T-cell (primary cell): ENCODE measurements at regions of chr5 and their contacts with region 1.

Region 1: GRCh38 chr5:82058710-82059109 is 86.9 kb downstream of the ATG10 start:
- DNase-seq: no peak
- ATAC-seq: no peak
- H3K4me3 ChIP-seq: no peak overlapping the region
- H3K4me3 Mint-ChIP-seq: no peak overlapping the region
- H3K27ac ChIP-seq: no peak overlapping the region
- H3K27ac Mint-ChIP-seq: no peak overlapping the region
- H3K4me1 ChIP-seq: no peaks in the 10 kb centered on the region
- H3K4me1 Mint-ChIP-seq: peaks cover 0 to 14% (median 6%) of the 10 kb centered on the region in 3 donors
- H3K27me3 ChIP-seq: no peaks in the 10 kb centered on the region
- H3K27me3 Mint-ChIP-seq: no peaks in the 10 kb centered on the region

Region 2: GRCh38 chr5:81994679-81995078 is 64.0 kb before region 1 on chr5:
- CTCF ChIA-PET with region 1: no interaction called
- POLR2A ChIA-PET with region 1: no interaction called
- DNase-seq: no peak
- ATAC-seq: no peak
- H3K4me3 ChIP-seq: no peak overlapping the region
- H3K4me3 Mint-ChIP-seq: no peak overlapping the region
- H3K27ac ChIP-seq: no peak overlapping the region
- H3K27ac Mint-ChIP-seq: no peak overlapping the region
- H3K4me1 ChIP-seq: no peaks in the 10 kb centered on the region
- H3K4me1 Mint-ChIP-seq: peaks cover 0 to 14% (median 2%) of the 10 kb centered on the region in 3 donors
- H3K27me3 ChIP-seq: no peaks in the 10 kb centered on the region
- H3K27me3 Mint-ChIP-seq: no peaks in the 10 kb centered on the region

Region 3: GRCh38 chr5:82018462-82018861 is 40.2 kb before region 1 on chr5:
- CTCF ChIA-PET with region 1: no interaction called
- POLR2A ChIA-PET with region 1: no interaction called
- DNase-seq: no peak
- ATAC-seq: no peak
- H3K4me3 ChIP-seq: no peak overlapping the region
- H3K4me3 Mint-ChIP-seq: no peak overlapping the region
- H3K27ac ChIP-seq: no peak overlapping the region
- H3K27ac Mint-ChIP-seq: no peak overlapping the region
- H3K4me1 ChIP-seq: no peaks in the 10 kb centered on the region
- H3K4me1 Mint-ChIP-seq: no peaks in the 10 kb centered on the region
- H3K27me3 ChIP-seq: no peaks in the 10 kb centered on the region
- H3K27me3 Mint-ChIP-seq: no peaks in the 10 kb centered on the region

Region 4: DNA sequence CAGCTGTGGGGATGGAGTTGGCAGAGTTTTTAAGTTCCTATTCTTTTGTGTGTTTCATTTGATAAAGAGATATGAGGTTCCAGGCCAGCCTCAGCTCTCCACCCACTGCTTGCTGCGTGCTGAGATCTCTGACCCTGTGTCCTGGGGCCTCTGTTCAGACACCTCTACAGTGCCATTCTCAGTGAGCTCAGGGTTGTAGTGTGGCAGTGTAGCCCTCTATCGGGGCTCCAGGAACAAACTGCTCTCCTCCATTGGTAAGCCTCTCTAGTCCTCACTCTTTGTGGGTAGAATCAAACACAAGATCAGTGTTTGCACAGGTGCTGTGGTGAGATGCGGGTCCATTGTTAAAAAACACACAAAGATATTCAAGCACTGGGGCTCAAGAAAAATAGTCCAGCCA is 606.0 kb after region 1 on chr5:
- CTCF ChIA-PET with region 1: no interaction called
- POLR2A ChIA-PET with region 1: interaction called in 1 of 2 experiments, 11 read pairs
- DNase-seq: no peak
- ATAC-seq: no peak
- H3K4me3 ChIP-seq: no peak overlapping the region
- H3K4me3 Mint-ChIP-seq: no peak overlapping the region
- H3K27ac ChIP-seq: no peak overlapping the region
- H3K27ac Mint-ChIP-seq: no peak overlapping the region
- H3K4me1 ChIP-seq: no peaks in the 10 kb centered on the region
- H3K4me1 Mint-ChIP-seq: no peaks in the 10 kb centered on the region
- H3K27me3 ChIP-seq: peaks cover 0 to 3% of the 10 kb centered on the region in 2 experiments
- H3K27me3 Mint-ChIP-seq: peaks cover 0 to 5% of the 10 kb centered on the region in 2 donors